Heart left ventricle (tissue), 16 donors: ENCODE measurements at regions of chr1 and their contacts with region 1.

Region 1: DNA sequence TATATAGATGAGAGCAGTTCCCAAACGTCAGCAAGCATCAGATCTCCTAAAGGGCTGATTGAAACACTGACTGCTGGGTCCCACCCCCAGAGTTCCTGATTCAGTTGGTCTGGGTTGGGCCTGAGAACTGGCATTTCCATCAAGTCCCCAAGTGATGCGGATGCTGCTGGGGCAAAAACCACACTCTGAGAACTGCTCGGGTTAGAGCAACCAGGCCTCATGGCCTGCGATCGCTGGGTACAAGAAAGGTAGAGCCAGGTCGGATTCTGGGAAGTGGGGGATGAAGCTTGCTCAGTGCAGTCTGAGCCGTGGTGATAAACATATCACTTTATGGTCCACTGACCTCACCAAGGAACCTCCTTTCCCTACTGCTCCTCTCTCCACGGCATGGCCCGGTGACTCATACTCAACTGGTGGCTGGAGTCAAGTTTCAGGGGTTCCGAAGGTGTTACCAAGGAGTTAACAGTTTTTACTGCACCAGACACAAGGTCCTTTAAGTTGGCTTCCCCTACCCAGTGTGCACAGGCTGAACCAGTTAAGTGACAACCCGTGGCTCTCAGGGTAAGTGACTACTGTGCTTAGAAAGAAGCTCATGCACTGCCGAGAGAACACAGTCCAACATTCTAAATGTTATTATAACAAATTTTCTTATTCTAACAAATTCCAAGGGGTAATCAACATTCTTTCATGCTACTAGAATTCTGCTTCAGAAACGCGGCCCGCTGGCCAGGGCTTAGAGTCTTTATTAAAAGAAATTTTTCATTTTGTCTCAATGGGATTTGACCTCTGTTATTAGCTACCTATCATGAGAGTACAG is 153.5 kb downstream of the TGFBR3 start:
- DNase-seq: no peak
- ATAC-seq: peak in 2 of 4 donors; percentile 2 to 32
- H3K4me3 ChIP-seq: no peak overlapping the region
- H3K27ac ChIP-seq: peak overlapping the region in 5 of 12 donors; percentile 24 to 92 (median 42)
- H3K4me1 ChIP-seq: peaks cover 0 to 78% (median 44%) of the 10 kb centered on the region in 12 donors
- H3K27me3 ChIP-seq: no peaks in the 10 kb centered on the region
- CTCF ChIP-seq: no peak
- POLR2A ChIP-seq: no peak

Region 2: GRCh38 chr1:91751275-91751674 is 18.8 kb after region 1 on chr1:
- intact Hi-C with region 1: no loop called
- DNase-seq: peak in 4 of 5 donors; percentile 36 to 66 (median 51)
- ATAC-seq: peak; percentile 63 to 90 (median 86)
- H3K4me3 ChIP-seq: no peak overlapping the region
- H3K27ac ChIP-seq: peak overlapping the region in 11 of 12 donors; percentile 19 to 73 (median 60)
- H3K4me1 ChIP-seq: peaks cover 0 to 65% (median 33%) of the 10 kb centered on the region in 12 donors
- H3K27me3 ChIP-seq: no peaks in the 10 kb centered on the region
- CTCF ChIP-seq: no peak
- POLR2A ChIP-seq: no peak

Region 3: DNA sequence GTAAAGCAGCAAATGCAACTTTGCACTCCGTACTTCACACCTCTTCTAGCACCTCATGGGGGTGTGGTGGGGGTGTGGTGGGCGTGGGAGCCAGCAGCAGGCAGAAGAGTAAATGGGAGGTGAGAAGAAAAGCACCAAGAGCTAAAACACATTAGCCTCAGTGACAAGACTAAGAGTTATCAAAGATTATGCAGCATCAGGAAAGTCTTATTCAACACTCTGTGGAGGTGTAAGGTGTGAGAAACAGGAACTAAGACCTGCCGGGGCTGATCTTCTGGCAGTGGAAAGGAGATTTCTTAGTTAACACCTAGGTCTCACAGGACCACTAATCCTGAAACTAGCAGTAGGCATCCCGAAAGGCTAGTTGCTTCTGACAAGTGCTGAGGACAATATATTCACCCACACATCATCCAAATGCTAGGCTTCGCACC is 143.6 kb after region 1 on chr1:
- intact Hi-C with region 1: loop called in 3 of 10 experiments (anchors 10 kb)
- DNase-seq: no peak
- ATAC-seq: no peak
- H3K4me3 ChIP-seq: no peak overlapping the region
- H3K27ac ChIP-seq: no peak overlapping the region
- H3K4me1 ChIP-seq: peaks cover 0 to 57% (median 18%) of the 10 kb centered on the region in 12 donors
- H3K27me3 ChIP-seq: no peaks in the 10 kb centered on the region
- CTCF ChIP-seq: no peak
- POLR2A ChIP-seq: no peak